ENCODE measurements at regions of chr15 and their contacts with region 1.

Region 1: DNA sequence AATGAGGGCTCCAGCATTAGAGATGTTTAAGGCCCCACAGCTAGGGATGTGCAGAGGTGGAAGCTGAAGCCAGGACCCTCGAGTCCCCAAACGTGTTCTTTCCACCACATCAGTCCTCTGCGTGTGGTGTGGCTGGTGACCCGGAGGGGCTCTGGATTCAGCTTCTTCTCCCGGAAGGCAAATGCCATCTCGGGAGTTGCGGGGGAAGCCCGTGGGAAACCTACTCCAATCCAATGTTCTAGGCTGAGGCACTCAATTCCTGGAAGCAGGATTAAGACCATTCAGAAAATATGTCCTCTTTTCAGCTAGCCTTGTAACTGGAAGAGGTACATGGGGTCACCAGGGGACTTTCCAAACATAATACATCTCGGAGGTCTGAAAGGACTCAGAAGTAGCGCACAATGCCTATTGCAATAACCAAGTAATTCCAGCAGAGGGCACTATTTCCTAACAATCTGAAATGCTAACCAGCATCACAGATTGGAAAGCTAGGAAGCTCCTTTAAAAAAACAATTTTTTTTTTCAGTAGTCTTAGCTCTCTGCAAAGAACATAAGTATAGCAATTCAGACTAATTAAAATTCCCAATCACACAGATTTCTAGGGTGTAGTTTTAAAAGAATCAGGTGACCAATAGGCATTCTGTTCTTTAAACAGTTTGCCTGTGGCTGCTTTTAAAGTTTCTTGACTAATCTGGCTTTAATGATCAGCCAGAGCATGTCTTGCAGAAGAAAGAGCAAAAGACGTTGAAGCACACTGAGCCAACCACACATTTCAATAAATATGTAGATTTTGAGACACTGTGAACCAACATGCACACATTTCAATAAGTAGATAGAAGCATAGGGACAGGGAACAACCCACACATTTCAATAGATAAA is 36.1 kb downstream of the BNC1 start:
- DNase-seq: peak; percentile 26
- H3K4me3 ChIP-seq: no peak overlapping the region
- H3K27ac ChIP-seq: no peak overlapping the region
- H3K27me3 ChIP-seq: peaks cover 8% of the 10 kb centered on the region
- CTCF ChIP-seq: peak; percentile 84

Region 2: DNA sequence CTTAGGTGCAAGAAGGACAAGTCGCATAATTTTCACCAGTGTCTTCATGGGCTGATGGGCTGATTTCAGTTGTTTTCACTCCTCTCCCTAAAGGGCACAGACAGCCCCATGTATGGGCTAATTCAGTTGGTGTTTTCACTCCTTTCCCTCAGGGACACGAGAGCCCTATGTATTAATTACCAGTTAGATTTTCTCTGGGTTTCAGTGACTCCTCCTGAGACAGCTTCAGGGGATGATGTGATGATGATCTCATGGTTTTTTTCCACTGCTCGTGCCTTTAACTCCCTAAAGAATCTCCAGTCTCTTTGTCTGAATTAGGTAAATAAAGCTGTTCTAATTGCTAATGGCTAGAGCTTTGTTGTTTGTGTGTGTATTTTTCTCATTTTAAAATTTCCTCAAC is 252.5 kb before region 1 on chr15:
- CTCF ChIA-PET with region 1: no interaction called
- POLR2A ChIA-PET with region 1: no interaction called
- DNase-seq: no peak
- H3K4me3 ChIP-seq: no peak overlapping the region
- H3K27ac ChIP-seq: no peak overlapping the region
- H3K27me3 ChIP-seq: no peaks in the 10 kb centered on the region
- CTCF ChIP-seq: no peak

Region 3: GRCh38 chr15:83262594-83263315 is 14.4 kb after region 1 on chr15:
- CTCF ChIA-PET with region 1: interaction called, 13 read pairs
- POLR2A ChIA-PET with region 1: no interaction called
- DNase-seq: no peak
- H3K4me3 ChIP-seq: no peak overlapping the region
- H3K27ac ChIP-seq: no peak overlapping the region
- H3K27me3 ChIP-seq: no peaks in the 10 kb centered on the region
- CTCF ChIP-seq: no peak

Region 4: GRCh38 chr15:83380682-83381081 is 132.3 kb after region 1 on chr15:
- CTCF ChIA-PET with region 1: interaction called, 24 read pairs
- POLR2A ChIA-PET with region 1: no interaction called
- DNase-seq: no peak
- H3K4me3 ChIP-seq: no peak overlapping the region
- H3K27ac ChIP-seq: no peak overlapping the region
- H3K27me3 ChIP-seq: peaks cover 8% of the 10 kb centered on the region
- CTCF ChIP-seq: peak; percentile 17; the same call in 1 of the 2 replicates

Region 5: DNA sequence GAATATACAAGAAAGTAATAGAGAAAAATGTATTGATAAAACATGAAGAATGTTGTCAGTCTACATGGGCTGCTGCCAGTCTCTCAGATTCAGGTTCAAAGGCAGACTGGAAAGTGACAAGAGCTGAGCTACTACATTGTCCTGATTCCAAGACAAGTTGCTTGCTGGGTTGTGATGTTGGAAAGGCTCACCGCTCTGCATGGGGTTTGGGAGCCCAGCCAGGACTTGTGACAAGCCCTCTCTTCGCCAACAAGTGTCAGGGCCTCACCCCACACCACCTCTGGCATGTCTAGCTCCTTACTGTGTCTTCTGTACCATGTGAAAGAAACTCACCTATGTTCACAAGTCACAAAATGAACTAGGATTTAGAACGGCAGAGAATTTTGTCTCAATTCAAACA is 155.7 kb after region 1 on chr15:
- CTCF ChIA-PET with region 1: no interaction called
- POLR2A ChIA-PET with region 1: no interaction called
- DNase-seq: no peak
- H3K4me3 ChIP-seq: no peak overlapping the region
- H3K27ac ChIP-seq: no peak overlapping the region
- H3K27me3 ChIP-seq: no peaks in the 10 kb centered on the region
- CTCF ChIP-seq: no peak

Region 6: GRCh38 chr15:83446904-83447709 is 198.7 kb after region 1 on chr15 and contains the start of gene SH3GL3:
- CTCF ChIA-PET with region 1: interaction called, 10 read pairs
- POLR2A ChIA-PET with region 1: no interaction called
- DNase-seq: no peak
- H3K4me3 ChIP-seq: peak within 1 kb of the TSS; percentile 46
- H3K27ac ChIP-seq: no peak within 1 kb of the TSS
- H3K27me3 ChIP-seq: peaks cover 27% of the 10 kb centered on the region
- CTCF ChIP-seq: peak; percentile 27
- polyA plus RNA-seq, gene SH3GL3: not detected in 2 replicates

Region 7: DNA sequence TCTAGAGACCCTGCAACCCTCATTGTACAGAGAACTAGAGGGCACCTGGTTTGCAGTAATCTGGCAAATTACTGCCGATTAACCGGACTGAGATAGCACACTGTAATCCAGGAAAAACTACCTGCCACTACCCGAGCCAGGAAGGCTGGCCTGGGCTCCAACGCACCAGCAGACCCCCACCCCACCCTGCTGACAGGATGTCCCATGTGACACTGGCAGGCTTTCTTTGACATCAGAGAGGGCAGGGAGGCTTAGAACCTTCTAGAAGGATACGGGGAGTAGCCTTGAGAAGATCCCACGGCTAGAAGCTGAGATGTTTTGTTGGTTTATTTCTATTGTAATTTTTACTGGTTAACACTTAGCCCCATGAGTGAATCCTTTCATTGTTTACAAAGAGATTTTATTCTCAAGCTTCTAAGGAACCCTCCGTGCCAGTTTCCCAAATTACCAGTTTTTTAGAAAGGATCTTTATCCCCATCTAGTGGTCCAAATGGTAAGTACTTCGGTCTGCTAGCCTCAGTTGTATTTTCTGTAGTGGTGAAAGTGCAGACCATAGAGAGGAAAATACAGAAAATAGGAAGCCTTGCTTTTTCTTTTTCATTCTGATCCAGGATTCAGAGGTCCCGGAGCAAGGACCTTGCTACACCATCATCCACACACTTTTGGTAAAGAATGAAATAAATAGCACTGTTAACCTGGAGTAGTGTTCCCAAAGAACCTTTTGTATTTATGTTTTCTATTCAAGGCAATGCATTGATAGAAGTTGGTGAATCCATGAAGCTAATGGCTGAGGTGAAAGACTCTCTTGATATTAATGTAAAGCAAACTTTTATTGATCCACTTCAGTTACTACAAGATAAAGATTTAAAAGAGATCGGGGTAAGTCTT is 323.7 kb after region 1 on chr15:
- CTCF ChIA-PET with region 1: interaction called, 28 read pairs
- POLR2A ChIA-PET with region 1: no interaction called
- DNase-seq: no peak
- H3K4me3 ChIP-seq: no peak overlapping the region
- H3K27ac ChIP-seq: no peak overlapping the region
- H3K27me3 ChIP-seq: no peaks in the 10 kb centered on the region
- CTCF ChIP-seq: peak; percentile 70